AG04449 (cell line): ENCODE measurements at regions of chr7 and their contacts with region 1.

Region 1: DNA sequence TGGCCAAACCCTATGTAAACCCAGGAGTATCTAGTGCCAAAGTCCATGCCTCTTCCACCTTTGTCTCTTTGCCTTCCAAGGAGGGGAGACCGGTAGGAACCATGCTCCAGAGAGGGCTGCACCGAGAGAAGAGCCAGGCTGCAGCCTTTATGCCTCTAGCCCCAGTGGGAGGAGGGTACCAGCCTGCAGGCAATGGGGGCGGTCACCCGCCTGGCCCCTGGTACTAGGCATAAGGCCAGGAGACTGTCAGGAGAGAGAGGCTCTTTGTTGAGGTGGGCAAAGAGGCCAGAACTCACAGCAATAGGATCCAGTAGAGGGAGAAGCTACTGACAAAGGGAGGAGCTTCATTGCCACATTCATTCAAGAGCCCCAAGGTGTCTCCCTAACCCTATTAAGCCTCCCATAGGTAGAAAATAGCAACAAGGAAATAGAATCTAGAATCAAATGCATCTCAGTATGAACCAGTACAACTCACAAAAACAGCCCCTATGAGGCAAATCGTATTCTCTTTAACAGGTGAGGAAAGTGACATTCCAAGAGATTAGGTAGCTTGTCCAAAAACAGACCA is 146.6 kb upstream of the PDE1C start:
- DNase-seq: no peak
- H3K4me3 ChIP-seq: no peak overlapping the region
- CTCF ChIP-seq: no peak

Region 2: GRCh38 chr7:32248522-32248921 is 31.7 kb after region 1 on chr7:
- CTCF ChIA-PET with region 1: no interaction called
- POLR2A ChIA-PET with region 1: no interaction called
- DNase-seq: no peak
- H3K4me3 ChIP-seq: no peak overlapping the region
- CTCF ChIP-seq: no peak

Region 3: DNA sequence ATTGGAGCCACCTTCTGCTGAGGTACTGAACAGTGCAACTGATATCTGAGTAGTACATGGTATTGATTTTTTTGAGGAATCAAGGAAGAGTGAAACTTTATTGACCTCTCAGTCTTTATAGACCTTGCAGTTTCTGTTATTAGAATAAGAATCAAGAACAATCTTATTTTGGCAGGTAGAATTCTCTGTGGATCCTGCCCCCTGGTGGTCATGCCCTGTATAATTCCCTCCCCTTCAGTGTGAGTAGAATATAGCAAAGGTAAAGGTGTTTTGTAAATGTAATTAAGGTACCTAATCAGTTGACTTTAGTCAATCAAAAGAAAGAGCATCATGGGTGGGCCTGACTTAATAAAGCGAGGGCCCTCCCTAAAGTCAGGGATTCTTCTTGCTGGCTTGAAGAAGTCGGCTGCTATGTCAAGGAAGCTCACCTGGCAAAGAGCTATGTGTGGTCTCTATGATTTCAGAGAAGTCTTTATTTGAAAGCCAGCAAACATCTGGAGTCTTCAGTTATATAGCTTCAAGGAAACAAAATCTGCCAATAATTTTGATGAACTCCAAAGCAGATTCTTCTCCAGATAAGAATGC is 130.5 kb after region 1 on chr7:
- CTCF ChIA-PET with region 1: interaction called, 27 read pairs
- POLR2A ChIA-PET with region 1: no interaction called
- DNase-seq: no peak
- H3K4me3 ChIP-seq: no peak overlapping the region
- CTCF ChIP-seq: peak; percentile 34

Region 4: GRCh38 chr7:32479574-32480200 is 262.8 kb after region 1 on chr7:
- CTCF ChIA-PET with region 1: interaction called, 255 read pairs
- POLR2A ChIA-PET with region 1: no interaction called
- DNase-seq: no peak
- H3K4me3 ChIP-seq: no peak overlapping the region
- CTCF ChIP-seq: peak; percentile 81